ENCODE measurements at regions of chr2 and their contacts with region 1.

Region 1: GRCh38 chr2:197515739-197516392 is at the start of gene MOB4:
- DNase-seq: peak; percentile 98
- ATAC-seq: peak; percentile 94
- H3K4me3 Mint-ChIP-seq: peak within 1 kb of the TSS; percentile 91
- H3K27ac Mint-ChIP-seq: peak within 1 kb of the TSS; percentile 85
- H3K4me1 Mint-ChIP-seq: peaks cover 18% of the 10 kb centered on the region
- H3K27me3 Mint-ChIP-seq: no peaks in the 10 kb centered on the region
- total RNA-seq, gene MOB4: 17.2 to 18.1 TPM

Region 2: DNA sequence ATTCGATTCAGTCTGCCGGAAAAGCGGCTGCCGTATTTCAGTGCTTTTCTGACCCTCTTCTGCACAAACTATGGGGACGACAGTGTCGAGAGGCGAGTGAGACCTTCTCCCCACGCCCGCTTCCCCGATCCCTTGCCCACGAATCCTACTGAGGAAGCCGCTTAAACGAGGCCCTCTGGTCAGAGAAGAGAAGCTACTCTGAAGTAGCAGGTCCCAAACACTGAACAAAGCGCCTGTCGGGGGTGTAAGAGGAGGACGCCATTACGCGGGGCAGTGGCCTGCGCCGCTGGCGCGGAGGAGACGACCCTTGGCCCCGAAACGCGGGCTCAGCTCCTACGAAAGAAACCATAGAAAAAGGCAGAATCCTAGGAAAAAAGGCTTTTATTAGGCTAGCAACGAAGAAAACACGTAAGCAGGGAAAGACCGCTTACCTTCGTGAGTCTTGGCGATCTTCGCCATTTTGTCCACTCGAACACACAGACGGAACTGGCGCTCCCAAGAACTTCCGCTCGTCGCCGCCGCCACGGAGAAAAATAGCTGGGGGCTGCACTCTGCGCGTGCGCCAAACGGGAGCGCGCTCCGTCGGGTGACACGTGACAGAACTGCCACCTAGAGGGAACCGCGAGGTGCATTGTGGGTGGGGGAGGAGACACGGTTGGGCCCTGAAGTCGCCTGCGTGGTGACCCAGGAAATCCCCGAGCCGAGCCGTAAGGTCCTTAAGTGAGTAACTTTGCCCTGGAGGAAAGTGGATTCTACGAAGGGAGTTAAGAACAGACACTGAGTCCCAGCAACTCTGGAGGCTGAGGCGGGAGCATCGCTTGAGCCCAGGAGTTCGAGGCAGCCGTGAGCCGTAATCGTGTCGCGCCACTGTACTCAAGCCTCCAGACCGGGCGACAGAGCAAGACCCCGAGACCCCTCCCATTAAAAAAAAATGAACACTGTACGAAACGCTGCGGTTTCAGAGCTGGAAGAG is 81.0 kb before region 1 on chr2 and contains the start of gene SF3B1:
- POLR2A ChIA-PET with region 1: interaction called, 31 read pairs
- DNase-seq: peak; percentile 99
- ATAC-seq: peak; percentile 95
- H3K4me3 Mint-ChIP-seq: peak within 1 kb of the TSS; percentile 85
- H3K27ac Mint-ChIP-seq: peak within 1 kb of the TSS; percentile 100
- H3K4me1 Mint-ChIP-seq: peaks cover 38% of the 10 kb centered on the region
- H3K27me3 Mint-ChIP-seq: no peaks in the 10 kb centered on the region
- total RNA-seq, gene SF3B1: 388 to 392 TPM

Region 3: GRCh38 chr2:197453161-197453914 is 62.5 kb before region 1 on chr2 and contains the start of gene COQ10B:
- POLR2A ChIA-PET with region 1: interaction called, 11 read pairs
- DNase-seq: peak; percentile 94
- ATAC-seq: peak; percentile 93
- H3K4me3 Mint-ChIP-seq: peak within 1 kb of the TSS; percentile 88
- H3K27ac Mint-ChIP-seq: peak within 1 kb of the TSS; percentile 96
- H3K4me1 Mint-ChIP-seq: peaks cover 24% of the 10 kb centered on the region
- H3K27me3 Mint-ChIP-seq: no peaks in the 10 kb centered on the region
- total RNA-seq, gene COQ10B: 24.8 to 25.2 TPM

Region 4: DNA sequence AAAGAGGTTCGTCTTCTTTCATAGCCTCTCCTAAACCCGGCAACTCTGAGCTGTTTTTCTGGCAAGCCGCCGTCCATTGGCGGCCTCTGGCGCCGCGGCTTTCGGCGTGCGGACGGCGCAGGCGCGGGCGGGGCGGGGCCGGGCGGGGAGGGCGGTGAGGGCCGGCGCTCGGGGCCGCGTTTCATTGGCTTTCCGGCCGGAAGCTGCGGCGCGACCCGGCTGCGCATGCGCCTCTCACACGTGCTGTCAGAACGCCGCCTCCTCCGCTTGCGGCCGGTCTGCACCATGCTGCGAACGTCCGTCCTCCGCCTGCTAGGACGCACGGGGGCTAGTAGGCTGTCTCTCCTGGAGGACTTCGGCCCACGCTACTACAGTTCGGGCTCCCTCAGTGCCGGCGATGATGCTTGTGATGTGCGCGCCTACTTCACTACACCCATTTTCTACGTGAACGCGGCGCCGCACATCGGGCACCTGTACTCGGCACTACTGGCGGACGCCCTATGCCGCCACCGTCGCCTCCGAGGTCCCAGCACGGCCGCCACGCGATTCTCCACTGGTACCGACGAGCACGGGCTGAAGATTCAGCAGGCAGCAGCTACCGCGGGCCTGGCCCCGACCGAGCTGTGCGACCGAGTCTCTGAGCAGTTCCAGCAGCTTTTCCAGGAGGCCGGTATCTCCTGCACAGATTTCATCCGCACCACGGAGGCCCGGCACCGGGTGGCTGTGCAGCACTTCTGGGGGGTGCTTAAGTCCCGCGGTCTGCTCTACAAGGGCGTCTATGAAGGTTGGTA is 189.4 kb after region 1 on chr2 and contains the start of gene MARS2:
- POLR2A ChIA-PET with region 1: interaction called, 18 read pairs
- DNase-seq: peak; percentile 95
- ATAC-seq: peak; percentile 86
- H3K4me3 Mint-ChIP-seq: peak within 1 kb of the TSS; percentile 89
- H3K27ac Mint-ChIP-seq: peak within 1 kb of the TSS; percentile 94
- H3K4me1 Mint-ChIP-seq: peaks cover 37% of the 10 kb centered on the region
- H3K27me3 Mint-ChIP-seq: no peaks in the 10 kb centered on the region
- total RNA-seq, gene MARS2: 13.7 to 16.0 TPM